Dorsolateral prefrontal cortex (tissue), 120 donors: ENCODE measurements at regions of chr13 and their contacts with region 1.

Region 1: GRCh38 chr13:38914070-38914469 is 76.6 kb downstream of the STOML3 start:
- DNase-seq: no peak
- H3K4me3 ChIP-seq: no peak overlapping the region
- H3K27ac ChIP-seq: no peak overlapping the region
- H3K27me3 ChIP-seq: no peaks in the 10 kb centered on the region
- CTCF ChIP-seq: no peak

Region 2: GRCh38 chr13:38473305-38473704 is 440.8 kb before region 1 on chr13:
- intact Hi-C with region 1: no loop called
- DNase-seq: no peak
- H3K4me3 ChIP-seq: no peak overlapping the region
- H3K27ac ChIP-seq: no peak overlapping the region
- H3K27me3 ChIP-seq: peaks cover 0 to 5% (median 0%) of the 10 kb centered on the region in 45 donors
- CTCF ChIP-seq: no peak

Region 3: GRCh38 chr13:38641164-38641951 is 272.7 kb before region 1 on chr13:
- intact Hi-C with region 1: no loop called
- DNase-seq: no peak
- H3K4me3 ChIP-seq: no peak overlapping the region
- H3K27ac ChIP-seq: no peak overlapping the region
- H3K27me3 ChIP-seq: no peaks in the 10 kb centered on the region
- CTCF ChIP-seq: peak in 11 of 56 donors; percentile 9 to 33 (median 18)

Region 4: DNA sequence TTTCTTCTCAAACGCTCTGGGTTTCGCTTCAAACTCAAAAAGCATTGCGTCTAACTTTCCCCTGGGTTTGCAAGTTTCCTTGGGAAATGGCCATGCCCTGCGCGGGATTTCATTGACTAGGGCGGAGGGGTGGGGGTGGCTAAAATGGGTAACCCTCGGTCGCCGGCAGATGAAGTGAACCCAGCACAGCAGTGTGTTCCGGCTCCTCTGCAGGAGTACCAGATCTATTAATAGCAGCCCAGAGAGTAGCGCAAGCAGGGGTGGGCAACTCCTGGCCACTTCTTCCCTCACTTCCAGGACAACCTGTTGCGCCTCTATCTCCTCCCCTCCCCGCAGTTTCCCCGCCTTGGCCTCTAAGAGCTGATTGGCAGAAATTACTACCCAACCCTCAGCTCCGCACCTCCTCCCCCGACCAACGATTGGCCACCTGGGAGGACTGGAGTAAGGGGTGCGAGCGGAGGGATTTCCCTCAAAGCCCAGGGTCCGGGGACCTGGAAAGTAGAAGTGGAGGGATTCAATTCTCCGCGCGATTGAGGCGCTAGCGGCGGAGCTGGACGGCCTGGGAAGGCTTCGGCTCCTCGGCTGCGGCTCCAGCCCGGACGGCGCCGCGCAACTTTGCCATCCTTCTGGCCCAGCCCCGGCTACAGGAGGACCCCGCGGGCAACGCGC is 227.4 kb before region 1 on chr13 and contains the start of gene FREM2:
- intact Hi-C with region 1: loop called (anchors 2 to 5 kb)
- DNase-seq: peak in 6 of 10 donors; percentile 41 to 66 (median 47)
- H3K4me3 ChIP-seq: peak within 1 kb of the TSS; percentile 36 to 82 (median 62)
- H3K27ac ChIP-seq: peak within 1 kb of the TSS in 10 of 59 donors; percentile 4 to 59 (median 26)
- H3K27me3 ChIP-seq: peaks cover 0 to 54% (median 27%) of the 10 kb centered on the region in 45 donors
- CTCF ChIP-seq: no peak
- total RNA-seq, gene FREM2: 0.56 to 8.2 (median 3.0) TPM

Region 5: DNA sequence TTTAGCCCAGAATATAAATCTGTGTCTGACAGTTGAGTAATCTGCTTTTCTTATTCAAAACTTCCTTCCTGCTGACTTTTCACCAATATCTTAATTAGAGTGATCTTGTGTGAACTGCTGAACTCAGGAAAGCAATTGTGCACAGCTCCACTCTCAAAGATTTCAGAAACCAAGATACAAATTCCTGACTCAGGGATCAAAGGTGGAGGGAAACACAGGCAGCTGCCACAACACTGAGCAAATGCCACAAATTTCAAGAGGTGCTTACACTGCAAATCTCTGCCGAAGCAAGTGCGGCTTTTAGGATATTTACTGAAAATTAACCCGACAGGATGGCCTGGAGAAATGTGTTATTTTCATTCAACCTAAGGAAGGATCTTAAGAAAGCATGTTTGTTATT is 34.8 kb before region 1 on chr13:
- intact Hi-C with region 1: loop called in 1 of 2 experiments (anchors 5 kb)
- DNase-seq: no peak
- H3K4me3 ChIP-seq: no peak overlapping the region
- H3K27ac ChIP-seq: no peak overlapping the region
- H3K27me3 ChIP-seq: no peaks in the 10 kb centered on the region
- CTCF ChIP-seq: no peak

Region 6: GRCh38 chr13:38951525-38952313 is 37.6 kb after region 1 on chr13:
- intact Hi-C with region 1: no loop called
- DNase-seq: no peak
- H3K4me3 ChIP-seq: peak overlapping the region in 21 of 59 donors; percentile 2 to 52 (median 24)
- H3K27ac ChIP-seq: no peak overlapping the region
- H3K27me3 ChIP-seq: no peaks in the 10 kb centered on the region
- CTCF ChIP-seq: no peak